Spleen (tissue), 13 donors: ENCODE measurements at regions of chr7 and their contacts with region 1.

Region 1: GRCh38 chr7:7182156-7183060 is at the start of gene C1GALT1:
- DNase-seq: peak; percentile 99
- H3K4me3 ChIP-seq: peak within 1 kb of the TSS; percentile 47 to 92 (median 82)
- H3K27ac ChIP-seq: peak within 1 kb of the TSS; percentile 94 to 100 (median 99)
- H3K4me1 ChIP-seq: peaks cover 21 to 58% (median 41%) of the 10 kb centered on the region in 6 donors
- H3K27me3 ChIP-seq: no peaks in the 10 kb centered on the region
- CTCF ChIP-seq: peak; percentile 29 to 81 (median 58)
- POLR2A ChIP-seq: peak; percentile 64 to 96 (median 86)
- total RNA-seq, gene C1GALT1: 36.9 to 61.2 (median 43.3) TPM

Region 2: GRCh38 chr7:7242899-7243298 is 60.5 kb after region 1 on chr7:
- intact Hi-C with region 1: loop called (anchors 10 kb)
- DNase-seq: no peak
- H3K4me3 ChIP-seq: no peak overlapping the region
- H3K27ac ChIP-seq: peak overlapping the region in 1 of 8 donors; percentile 5
- H3K4me1 ChIP-seq: peaks cover 7 to 23% (median 19%) of the 10 kb centered on the region in 6 donors
- H3K27me3 ChIP-seq: no peaks in the 10 kb centered on the region
- CTCF ChIP-seq: no peak
- POLR2A ChIP-seq: no peak

Region 3: GRCh38 chr7:7424151-7424873 is 241.9 kb after region 1 on chr7:
- intact Hi-C with region 1: loop called (anchors 10 kb)
- DNase-seq: no peak
- H3K4me3 ChIP-seq: peak overlapping the region; percentile 22 to 73 (median 39)
- H3K27ac ChIP-seq: peak overlapping the region in 6 of 8 donors; percentile 11 to 69 (median 54)
- H3K4me1 ChIP-seq: peaks cover 0 to 14% (median 9%) of the 10 kb centered on the region in 6 donors
- H3K27me3 ChIP-seq: no peaks in the 10 kb centered on the region
- CTCF ChIP-seq: peak; percentile 21 to 77 (median 65)
- POLR2A ChIP-seq: no peak